ENCODE measurements at regions of chr21 and their contacts with region 1.

Region 1: DNA sequence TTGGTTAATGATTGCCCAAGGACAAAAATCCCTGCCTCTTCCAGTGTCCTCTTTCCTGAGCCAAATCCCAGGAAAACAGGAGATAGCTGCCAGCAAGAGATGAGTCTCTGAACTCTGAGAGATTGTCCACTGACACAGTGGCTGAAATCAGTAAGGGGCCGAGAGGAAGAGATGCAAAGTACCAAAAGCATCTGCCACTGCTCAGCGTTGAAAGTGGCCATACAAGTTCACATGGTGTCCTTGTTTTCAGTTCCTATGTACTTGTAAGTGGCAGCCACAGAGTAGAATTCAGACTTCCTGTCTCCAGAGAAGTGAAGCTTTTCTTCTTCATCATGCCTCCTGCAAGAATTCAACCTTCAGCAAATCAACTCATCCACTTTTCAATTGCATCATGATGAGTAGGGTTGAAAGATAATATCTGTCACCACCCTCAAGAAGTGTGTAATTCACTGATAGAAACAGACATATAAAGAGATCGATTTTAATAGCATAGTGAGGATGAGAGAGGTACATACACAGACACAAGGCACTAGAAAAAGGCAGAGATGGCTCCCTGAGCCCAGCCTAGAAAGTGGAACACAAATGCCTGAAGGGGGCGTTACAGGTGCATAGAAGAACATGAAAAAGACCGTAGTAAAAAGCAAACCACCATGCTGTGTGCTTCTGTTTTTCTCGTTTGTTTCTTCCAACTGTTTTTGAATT is 185.8 kb downstream of the MRPL39 start:
- DNase-seq: peak; percentile 60
- H3K4me3 Mint-ChIP-seq: peak overlapping the region; percentile 77
- H3K27ac Mint-ChIP-seq: peak overlapping the region; percentile 77
- H3K4me1 Mint-ChIP-seq: peaks cover 46% of the 10 kb centered on the region
- H3K27me3 Mint-ChIP-seq: peaks cover 2% of the 10 kb centered on the region

Region 2: DNA sequence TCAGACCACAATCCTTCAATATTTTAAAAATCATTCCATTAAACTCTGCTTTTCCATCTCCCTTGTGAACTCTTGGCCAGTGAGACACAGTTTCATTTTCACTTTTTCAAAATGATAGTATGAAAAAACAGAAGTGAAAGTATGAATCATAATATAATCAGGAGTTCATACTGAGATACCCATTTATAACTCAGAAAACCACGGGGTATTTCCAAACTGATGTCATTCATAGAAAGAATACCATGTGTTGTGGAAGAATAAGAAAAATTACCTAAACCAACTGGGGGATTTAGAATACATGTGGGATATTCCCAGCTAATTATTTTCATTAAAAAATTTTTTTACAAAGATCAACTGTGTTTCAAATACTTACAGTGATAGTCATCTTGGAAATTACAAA is 35.9 kb after region 1 on chr21:
- intact Hi-C with region 1: loop called (anchors 1 kb)
- DNase-seq: no peak
- H3K4me3 Mint-ChIP-seq: peak overlapping the region; percentile 61
- H3K27ac Mint-ChIP-seq: peak overlapping the region; percentile 88
- H3K4me1 Mint-ChIP-seq: peaks cover 71% of the 10 kb centered on the region
- H3K27me3 Mint-ChIP-seq: no peaks in the 10 kb centered on the region

Region 3: DNA sequence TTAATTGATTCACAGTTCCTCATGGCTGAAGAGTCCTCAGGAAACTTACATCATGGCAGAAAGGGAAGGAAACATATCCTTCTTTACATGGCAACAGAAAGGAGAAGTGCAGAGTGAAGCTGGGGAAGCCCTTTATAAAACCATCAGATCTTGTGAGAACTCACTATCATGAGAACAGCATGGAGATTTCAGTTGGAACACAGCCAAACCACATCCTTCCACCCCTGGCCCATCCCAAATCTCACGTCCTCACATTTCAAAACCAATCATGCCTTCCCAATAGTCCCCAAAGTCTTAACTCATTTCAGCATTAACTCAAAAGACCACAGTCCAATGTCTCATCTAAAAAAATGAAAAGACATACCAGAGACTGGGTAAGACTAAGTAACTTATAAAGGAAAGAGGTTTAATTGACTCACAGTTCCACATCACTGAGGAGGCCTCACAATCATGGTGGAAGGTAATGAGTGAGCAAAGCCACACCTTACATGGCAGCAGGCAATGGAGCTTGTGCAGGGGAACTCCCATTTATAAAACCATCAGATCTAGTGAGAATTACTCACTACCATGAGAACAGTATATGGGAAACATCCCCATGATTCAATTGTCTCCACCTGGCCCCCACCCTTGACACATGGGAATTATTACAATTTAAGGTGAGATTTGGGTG is 80.7 kb after region 1 on chr21:
- intact Hi-C with region 1: loop called (anchors 2 kb)
- DNase-seq: no peak
- H3K4me3 Mint-ChIP-seq: no peak overlapping the region
- H3K27ac Mint-ChIP-seq: peak overlapping the region; percentile 84
- H3K4me1 Mint-ChIP-seq: peaks cover 21% of the 10 kb centered on the region
- H3K27me3 Mint-ChIP-seq: no peaks in the 10 kb centered on the region

Region 4: DNA sequence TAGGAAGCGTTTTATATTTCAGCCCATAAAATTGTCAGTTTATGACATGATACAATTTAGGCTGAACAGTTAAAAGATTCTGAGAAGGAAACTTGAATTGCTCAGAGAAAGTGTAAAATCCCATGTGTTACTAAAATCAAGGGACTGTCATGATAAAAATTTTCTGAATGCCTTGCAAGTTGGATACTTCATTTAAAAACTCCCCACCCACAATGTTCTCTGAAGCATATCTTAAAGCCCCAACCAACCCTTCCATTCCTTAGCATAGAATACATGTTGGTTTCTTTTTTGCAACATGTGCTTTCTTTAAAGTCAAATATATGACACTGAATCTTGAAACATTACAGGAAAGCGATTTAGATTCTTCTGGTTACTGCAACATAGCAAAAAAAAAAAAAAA is 88.4 kb after region 1 on chr21:
- intact Hi-C with region 1: loop called (anchors 1 kb)
- DNase-seq: no peak
- H3K4me3 Mint-ChIP-seq: no peak overlapping the region
- H3K27ac Mint-ChIP-seq: peak overlapping the region; percentile 13
- H3K4me1 Mint-ChIP-seq: peaks cover 42% of the 10 kb centered on the region
- H3K27me3 Mint-ChIP-seq: no peaks in the 10 kb centered on the region

Region 5: GRCh38 chr21:25708467-25709065 is 287.1 kb after region 1 on chr21:
- intact Hi-C with region 1: loop called (anchors 5 kb)
- DNase-seq: peak; percentile 4
- H3K4me3 Mint-ChIP-seq: no peak overlapping the region
- H3K27ac Mint-ChIP-seq: no peak overlapping the region
- H3K4me1 Mint-ChIP-seq: no peaks in the 10 kb centered on the region
- H3K27me3 Mint-ChIP-seq: no peaks in the 10 kb centered on the region

Measured in activated T-helper 1 cell treated with anti-CD3 and anti-CD28 coated beads, Interleukin-12 subunit alpha, Interleukin-12 subunit beta, Interleukin-2, Interleukin-4 antibody, amounts not matched to agents 30 ng/mL and 10 ng/mL and 1 ng/mL, durations not matched to agents 14 hours and 24 hours and 36 hours (primary cell).